Posterior vena cava (tissue), 2 donors: ENCODE measurements at regions of chr12 and their contacts with region 1.

Region 1: DNA sequence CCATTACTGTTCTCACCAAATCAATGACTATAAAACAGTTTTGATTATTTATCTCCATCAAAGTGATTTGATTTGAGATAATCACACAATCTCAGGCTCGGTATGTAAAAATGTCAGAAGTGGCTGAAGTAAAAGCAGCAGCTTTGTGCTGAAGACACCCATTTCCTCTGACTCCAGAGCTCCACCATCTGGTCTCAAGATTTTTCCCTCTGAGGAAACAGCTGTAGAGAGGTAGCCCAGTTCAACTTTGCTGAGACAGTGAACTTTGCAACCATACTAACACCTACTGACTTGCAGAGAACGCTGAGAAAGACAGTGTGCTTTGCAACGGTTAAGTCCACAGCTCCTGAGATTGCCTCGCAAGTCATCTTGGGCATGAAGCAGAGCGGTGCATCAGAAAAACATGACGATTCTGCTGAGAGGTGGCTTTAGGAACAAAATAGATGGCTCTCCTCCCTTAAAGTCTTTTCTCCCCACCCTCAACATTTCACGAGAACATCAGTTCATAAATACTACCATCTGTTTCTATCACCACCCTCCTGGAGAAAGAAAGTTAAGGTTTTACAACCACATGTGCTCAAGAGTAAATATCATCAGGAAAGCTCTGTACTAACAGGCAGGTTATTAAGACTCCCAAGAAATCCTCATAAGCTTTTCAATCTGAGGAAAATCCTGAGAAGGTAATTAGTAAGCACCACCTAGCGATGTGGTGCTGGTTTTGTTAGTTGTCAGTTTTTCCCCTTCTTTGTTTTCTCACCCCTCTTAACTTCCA is 34.8 kb downstream of the HIGD1C start:
- DNase-seq: no peak

Region 2: GRCh38 chr12:50825372-50825838 is 161.7 kb before region 1 on chr12:
- intact Hi-C with region 1: loop called (anchors 5 to 10 kb)
- DNase-seq: no peak

Region 3: GRCh38 chr12:50839042-50839441 is 148.1 kb before region 1 on chr12:
- intact Hi-C with region 1: loop called in 1 of 2 experiments (anchors 10 kb)
- DNase-seq: no peak

Region 4: DNA sequence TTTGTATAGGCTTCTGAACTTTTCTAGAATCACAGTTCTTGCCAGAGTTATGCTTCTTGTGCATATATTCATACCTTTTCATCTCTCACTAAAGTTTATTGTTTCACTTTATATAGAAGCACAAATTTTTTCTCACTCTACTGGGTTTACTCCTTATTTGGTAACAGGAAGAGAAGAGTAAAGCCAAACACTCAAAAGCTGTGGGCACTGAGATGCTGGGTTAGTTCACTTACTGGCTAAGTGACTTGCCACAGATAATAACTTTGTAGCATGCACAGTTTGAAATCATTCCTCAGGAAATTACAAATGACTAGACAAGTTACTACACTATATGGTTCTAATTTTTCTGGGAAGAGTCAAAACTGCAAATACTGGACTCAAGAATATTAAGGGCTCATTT is 27.0 kb before region 1 on chr12:
- intact Hi-C with region 1: no loop called
- DNase-seq: no peak